Activated T-helper 1 cell treated with anti-CD3 and anti-CD28 coated beads, Interleukin-12 subunit alpha, Interleukin-12 subunit beta, Interleukin-2, Interleukin-4 antibody, amounts not matched to agents 30 ng/mL and 10 ng/mL and 1 ng/mL, durations not matched to agents 14 hours and 24 hours and 36 hours (primary cell): ENCODE measurements at regions of chr10 and their contacts with region 1.

Region 1: GRCh38 chr10:86965986-86966654 is 2.2 kb upstream of the ADIRF start:
- DNase-seq: no peak
- H3K4me3 Mint-ChIP-seq: peak overlapping the region; percentile 34
- H3K27ac Mint-ChIP-seq: peak overlapping the region; percentile 70
- H3K4me1 Mint-ChIP-seq: peaks cover 16% of the 10 kb centered on the region
- H3K27me3 Mint-ChIP-seq: peaks cover 14% of the 10 kb centered on the region

Region 2: DNA sequence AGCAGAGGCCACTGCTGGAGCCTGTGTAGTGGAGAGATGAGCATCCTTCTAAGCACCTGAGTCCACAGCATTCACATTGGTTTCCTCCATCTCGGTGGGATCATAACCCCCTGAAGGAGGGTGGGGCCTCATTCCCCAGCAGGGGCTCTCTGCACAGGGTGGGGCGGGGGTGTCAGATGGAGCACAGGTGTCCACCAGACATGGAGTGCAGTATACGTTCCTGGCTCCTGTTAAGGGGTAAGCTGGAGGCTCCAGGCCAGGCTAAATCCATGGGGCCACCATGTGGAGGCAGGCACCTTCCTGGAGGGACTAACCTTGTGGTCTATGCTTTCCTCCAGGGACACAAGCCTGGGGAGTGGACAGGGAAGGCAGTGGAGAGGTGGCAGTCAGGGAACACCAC is 852.1 kb before region 1 on chr10:
- intact Hi-C with region 1: no loop called
- DNase-seq: no peak
- H3K4me3 Mint-ChIP-seq: no peak overlapping the region
- H3K27ac Mint-ChIP-seq: no peak overlapping the region
- H3K4me1 Mint-ChIP-seq: no peaks in the 10 kb centered on the region
- H3K27me3 Mint-ChIP-seq: peaks cover under 1% of the 10 kb centered on the region

Region 3: GRCh38 chr10:86688398-86688921 is 277.7 kb before region 1 on chr10:
- intact Hi-C with region 1: loop called (anchors 2 kb)
- DNase-seq: peak; percentile 28
- H3K4me3 Mint-ChIP-seq: no peak overlapping the region
- H3K27ac Mint-ChIP-seq: no peak overlapping the region
- H3K4me1 Mint-ChIP-seq: no peaks in the 10 kb centered on the region
- H3K27me3 Mint-ChIP-seq: peaks cover 9% of the 10 kb centered on the region